ENCODE measurements at regions of chr7 and their contacts with region 1.

Region 1: GRCh38 chr7:128209229-128210035 is 31.6 kb upstream of the LEP start:
- DNase-seq: peak; percentile 81 to 91
- ATAC-seq: peak; percentile 76 to 84
- H3K4me3 ChIP-seq: no peak overlapping the region
- H3K27ac ChIP-seq: no peak overlapping the region
- H3K4me1 ChIP-seq: no peaks in the 10 kb centered on the region
- CTCF ChIP-seq: peak; percentile 98
- EP300 ChIP-seq: no peak
- POLR2A ChIP-seq: no peak
- RAD21 ChIP-seq: peak; percentile 98 to 99

Region 2: GRCh38 chr7:127708788-127709187 is 500.6 kb before region 1 on chr7:
- CTCF ChIA-PET with region 1: interaction called, 81 read pairs
- POLR2A ChIA-PET with region 1: interaction called, 3 read pairs
- DNase-seq: peak; percentile 33 to 79
- ATAC-seq: peak; percentile 81 to 94
- H3K4me3 ChIP-seq: no peak overlapping the region
- H3K27ac ChIP-seq: no peak overlapping the region
- H3K4me1 ChIP-seq: peaks cover 10% of the 10 kb centered on the region; the same call in 1 of the 3 replicates
- CTCF ChIP-seq: peak; percentile 85
- EP300 ChIP-seq: no peak
- POLR2A ChIP-seq: no peak
- RAD21 ChIP-seq: peak; percentile 79 to 83

Region 3: DNA sequence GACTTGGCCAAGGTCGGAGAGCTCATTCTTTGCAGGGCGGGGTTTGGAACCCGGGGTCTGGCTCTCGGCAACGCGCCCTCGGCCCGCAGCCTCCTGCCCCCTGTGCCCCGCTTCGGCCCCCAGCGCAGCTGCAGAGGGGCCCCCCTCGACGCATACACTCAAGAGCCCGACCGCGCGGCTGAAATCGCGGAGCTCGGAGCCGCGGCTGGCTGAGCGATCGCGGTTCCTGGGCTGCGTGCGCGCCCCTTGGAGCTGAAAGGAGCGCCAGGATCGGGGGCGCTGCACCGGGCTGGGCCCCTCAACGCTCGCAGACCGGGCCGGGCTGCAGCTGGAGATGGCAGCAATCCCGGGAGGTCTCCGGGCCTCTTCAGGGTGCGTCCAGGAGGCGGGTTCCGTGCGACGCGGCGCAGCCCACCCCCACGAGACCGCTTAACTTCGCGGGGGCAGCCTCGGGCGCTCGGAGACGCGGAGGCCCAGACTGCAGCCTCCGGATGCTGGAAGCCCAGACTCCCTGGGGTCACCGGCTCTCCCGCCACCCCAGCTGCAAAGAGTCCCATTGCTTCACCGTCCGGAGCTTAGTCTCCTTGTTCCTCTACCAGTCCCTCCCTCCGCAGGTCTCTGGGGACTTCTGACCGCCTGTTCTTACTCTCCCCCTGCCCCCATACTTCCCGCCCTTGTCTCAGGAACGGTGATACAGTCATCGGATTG is 105.2 kb before region 1 on chr7:
- CTCF ChIA-PET with region 1: interaction called, 19 read pairs
- POLR2A ChIA-PET with region 1: no interaction called
- DNase-seq: no peak
- ATAC-seq: peak in 1 of 2 experiments; percentile 23; a peak in 3 of 6 replicates
- H3K4me3 ChIP-seq: peak overlapping the region; percentile 39
- H3K27ac ChIP-seq: peak overlapping the region in 1 of 2 experiments; percentile 53; a peak in 3 of 6 replicates
- H3K4me1 ChIP-seq: peaks cover 4% of the 10 kb centered on the region; the same call in 1 of the 3 replicates
- CTCF ChIP-seq: no peak
- EP300 ChIP-seq: no peak
- POLR2A ChIP-seq: no peak
- RAD21 ChIP-seq: no peak

Region 4: GRCh38 chr7:128145191-128145590 is 64.2 kb before region 1 on chr7:
- CTCF ChIA-PET with region 1: interaction called, 202 read pairs
- POLR2A ChIA-PET with region 1: no interaction called
- DNase-seq: no peak
- ATAC-seq: no peak
- H3K4me3 ChIP-seq: no peak overlapping the region
- H3K27ac ChIP-seq: no peak overlapping the region
- H3K4me1 ChIP-seq: no peaks in the 10 kb centered on the region; the same call in 2 of the 3 replicates
- CTCF ChIP-seq: no peak
- EP300 ChIP-seq: no peak
- POLR2A ChIP-seq: no peak
- RAD21 ChIP-seq: no peak

Region 5: DNA sequence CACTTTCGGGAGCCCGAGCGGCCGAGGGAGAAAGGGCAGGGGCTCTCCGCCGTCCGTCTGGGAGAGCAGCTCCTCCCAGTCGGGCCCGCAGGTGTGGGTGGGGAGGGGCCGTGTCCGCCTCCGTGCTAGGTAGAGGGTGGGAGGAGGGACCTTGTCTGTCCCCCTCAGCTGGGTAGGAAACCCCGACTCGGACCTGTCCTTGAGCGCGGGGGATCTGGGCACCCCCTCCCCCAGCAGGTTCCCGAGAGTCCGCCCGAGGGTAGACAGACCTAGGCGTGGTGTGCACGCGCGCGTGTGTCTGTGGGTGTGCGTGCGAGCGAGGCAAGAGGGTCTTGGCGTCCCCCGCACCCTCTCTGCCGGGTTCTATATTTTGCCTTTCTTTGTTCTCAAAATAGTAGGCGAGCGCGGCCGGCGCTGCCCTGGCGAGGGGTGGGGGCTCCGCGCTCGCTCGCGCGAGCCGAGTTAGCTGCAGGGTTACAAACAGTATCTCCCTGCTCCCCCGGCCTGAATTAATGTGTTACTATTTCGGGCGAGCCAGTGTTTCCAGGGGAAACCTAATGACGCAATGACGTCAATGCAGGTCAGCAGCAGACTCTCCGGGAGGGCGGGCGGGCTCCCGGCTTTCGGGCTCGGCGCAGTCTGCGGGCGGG is 42.3 kb before region 1 on chr7:
- CTCF ChIA-PET with region 1: interaction called, 18 read pairs
- POLR2A ChIA-PET with region 1: no interaction called
- DNase-seq: peak; percentile 60 to 72
- ATAC-seq: peak; percentile 33 to 50
- H3K4me3 ChIP-seq: peak overlapping the region; percentile 50
- H3K27ac ChIP-seq: peak overlapping the region; percentile 51 to 75; a peak in 5 of 6 replicates
- H3K4me1 ChIP-seq: peaks cover 25% of the 10 kb centered on the region
- CTCF ChIP-seq: no peak
- EP300 ChIP-seq: no peak
- POLR2A ChIP-seq: no peak
- RAD21 ChIP-seq: no peak

Region 6: DNA sequence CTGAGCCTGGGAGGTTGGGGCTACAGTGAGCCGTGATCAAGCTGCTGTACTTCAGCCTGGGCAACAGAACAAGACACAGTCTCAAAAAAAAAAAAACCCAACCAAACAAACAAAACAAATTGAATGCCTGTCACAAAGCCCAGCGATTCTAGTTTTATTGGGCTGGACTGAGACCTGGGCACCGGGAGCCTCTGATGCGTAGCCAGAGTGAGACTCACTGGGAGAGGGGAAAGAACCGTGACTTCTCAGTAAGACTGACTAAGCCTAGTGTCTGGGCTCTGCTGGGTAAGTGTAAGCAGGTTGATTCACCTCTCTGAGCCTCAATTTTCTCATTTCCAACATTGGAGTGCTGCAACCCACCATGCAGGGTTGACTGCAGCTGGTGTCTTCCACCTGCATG is 21.6 kb after region 1 on chr7:
- CTCF ChIA-PET with region 1: interaction called, 15 read pairs
- POLR2A ChIA-PET with region 1: interaction called, 4 read pairs
- DNase-seq: no peak
- ATAC-seq: no peak
- H3K4me3 ChIP-seq: no peak overlapping the region
- H3K27ac ChIP-seq: no peak overlapping the region
- H3K4me1 ChIP-seq: no peaks in the 10 kb centered on the region
- CTCF ChIP-seq: no peak
- EP300 ChIP-seq: no peak
- POLR2A ChIP-seq: no peak
- RAD21 ChIP-seq: no peak

Region 7: GRCh38 chr7:128437426-128438332 is 228.2 kb after region 1 on chr7:
- CTCF ChIA-PET with region 1: no interaction called
- POLR2A ChIA-PET with region 1: no interaction called
- DNase-seq: no peak
- ATAC-seq: no peak
- H3K4me3 ChIP-seq: no peak overlapping the region
- H3K27ac ChIP-seq: peak overlapping the region; percentile 43 to 87; a peak in 5 of 6 replicates
- H3K4me1 ChIP-seq: peaks cover 49% of the 10 kb centered on the region
- CTCF ChIP-seq: no peak
- EP300 ChIP-seq: no peak
- POLR2A ChIP-seq: no peak
- RAD21 ChIP-seq: no peak

Measured in A549 (cell line).